ENCODE measurements at regions of chr10 and their contacts with region 1.

Region 1: GRCh38 chr10:131900350-131901146 is at the start of gene PPP2R2D:
- DNase-seq: peak; percentile 96 to 98
- ATAC-seq: peak; percentile 97
- H3K4me3 ChIP-seq: peak within 1 kb of the TSS; percentile 94 to 98
- H3K27ac ChIP-seq: peak within 1 kb of the TSS; percentile 92 to 97
- H3K4me1 ChIP-seq: peaks cover 0 to under 1% of the 10 kb centered on the region in 2 donors
- H3K27me3 ChIP-seq: no peaks in the 10 kb centered on the region
- total RNA-seq, gene PPP2R2D: 27.0 to 29.4 TPM

Region 2: GRCh38 chr10:131819241-131820072 is 81.1 kb before region 1 on chr10:
- intact Hi-C with region 1: no loop called
- DNase-seq: peak in 1 of 2 donors; percentile 50
- ATAC-seq: no peak
- H3K4me3 ChIP-seq: no peak overlapping the region
- H3K27ac ChIP-seq: no peak overlapping the region
- H3K4me1 ChIP-seq: no peaks in the 10 kb centered on the region
- H3K27me3 ChIP-seq: no peaks in the 10 kb centered on the region

Region 3: DNA sequence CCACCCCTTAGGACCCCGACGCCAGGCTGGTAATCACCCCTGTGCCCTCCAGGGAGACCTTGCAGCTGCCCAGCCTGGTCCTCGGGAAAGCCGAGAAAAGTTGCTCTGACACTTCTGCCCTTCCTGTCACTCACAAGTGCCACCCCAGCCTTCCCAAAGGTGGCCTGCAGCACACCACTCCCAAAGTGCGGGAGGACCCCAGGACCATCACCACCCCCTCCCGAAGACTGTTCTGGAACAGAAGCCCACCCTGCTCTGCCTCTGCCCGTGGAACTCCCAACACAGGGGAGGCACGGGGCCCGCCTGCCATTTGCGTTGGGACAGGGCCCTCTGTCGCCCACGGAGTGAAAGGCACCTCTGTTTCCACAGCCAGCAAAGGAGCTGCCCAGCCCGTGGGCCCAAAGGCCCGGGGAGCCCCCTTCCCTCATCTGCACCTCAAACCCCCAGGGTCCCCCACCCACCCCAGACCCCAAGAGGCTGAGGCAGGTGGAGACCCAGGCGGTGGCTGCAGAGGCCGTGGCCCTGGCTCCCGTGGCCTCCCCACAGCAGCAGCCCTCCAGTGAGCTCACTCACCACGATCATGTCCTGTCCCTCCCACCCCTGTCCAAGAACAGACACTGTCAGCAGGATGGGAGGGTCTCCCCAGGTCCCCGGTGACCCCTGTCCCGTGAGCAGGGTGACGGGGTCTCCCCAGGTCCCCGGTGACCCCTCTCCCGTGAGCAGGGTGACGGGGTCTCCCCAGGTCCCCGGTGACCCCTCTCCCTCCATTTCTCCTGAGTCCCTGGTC is 47.5 kb before region 1 on chr10:
- intact Hi-C with region 1: no loop called
- DNase-seq: peak; percentile 29 to 61
- ATAC-seq: no peak
- H3K4me3 ChIP-seq: no peak overlapping the region
- H3K27ac ChIP-seq: no peak overlapping the region
- H3K4me1 ChIP-seq: no peaks in the 10 kb centered on the region
- H3K27me3 ChIP-seq: no peaks in the 10 kb centered on the region

Region 4: DNA sequence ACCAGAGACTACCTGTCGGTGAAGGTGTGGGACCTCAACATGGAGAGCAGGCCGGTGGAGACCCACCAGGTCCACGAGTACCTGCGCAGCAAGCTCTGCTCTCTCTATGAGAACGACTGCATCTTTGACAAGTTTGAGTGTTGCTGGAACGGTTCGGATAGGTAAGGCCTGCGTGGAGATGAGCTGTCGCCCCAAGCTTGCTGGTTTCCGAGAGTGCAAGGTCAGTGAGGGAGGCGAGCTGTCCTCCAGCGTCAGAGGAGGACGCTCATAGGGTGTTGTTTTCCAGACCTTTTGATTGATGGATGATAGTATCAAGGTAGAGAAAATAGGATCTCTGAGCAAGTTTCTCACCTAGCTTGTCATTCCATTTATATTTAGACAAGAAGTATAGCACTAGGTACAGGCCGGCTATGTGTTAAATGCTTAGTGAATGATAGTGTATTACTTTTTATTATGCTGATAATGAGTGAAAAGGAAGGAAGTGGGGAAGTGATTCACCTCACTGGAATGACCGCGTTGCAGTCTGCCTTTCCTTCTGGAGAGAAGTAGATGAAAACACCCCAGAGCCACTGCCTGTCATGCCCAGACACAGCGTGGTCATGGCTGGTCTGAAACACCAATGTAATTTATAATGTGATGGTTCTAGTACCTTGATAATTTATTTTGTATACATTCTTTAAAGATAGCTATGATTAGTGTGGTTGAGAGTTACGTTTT is 47.2 kb after region 1 on chr10:
- intact Hi-C with region 1: loop called in 1 of 2 experiments (anchors 1 kb)
- DNase-seq: peak in 1 of 2 donors; percentile 45
- ATAC-seq: no peak
- H3K4me3 ChIP-seq: no peak overlapping the region
- H3K27ac ChIP-seq: no peak overlapping the region
- H3K4me1 ChIP-seq: peaks cover 0 to 5% of the 10 kb centered on the region in 2 donors
- H3K27me3 ChIP-seq: no peaks in the 10 kb centered on the region

Region 5: GRCh38 chr10:131981429-131982184 is 81.1 kb after region 1 on chr10 and contains the start of gene BNIP3:
- intact Hi-C with region 1: loop called in 1 of 2 experiments (anchors 1 kb)
- DNase-seq: peak; percentile 95 to 99
- ATAC-seq: peak; percentile 94
- H3K4me3 ChIP-seq: peak within 1 kb of the TSS; percentile 40 to 97
- H3K27ac ChIP-seq: no peak within 1 kb of the TSS
- H3K4me1 ChIP-seq: no peaks in the 10 kb centered on the region
- H3K27me3 ChIP-seq: no peaks in the 10 kb centered on the region
- total RNA-seq, gene BNIP3: 29.4 to 32.7 TPM

Region 6: DNA sequence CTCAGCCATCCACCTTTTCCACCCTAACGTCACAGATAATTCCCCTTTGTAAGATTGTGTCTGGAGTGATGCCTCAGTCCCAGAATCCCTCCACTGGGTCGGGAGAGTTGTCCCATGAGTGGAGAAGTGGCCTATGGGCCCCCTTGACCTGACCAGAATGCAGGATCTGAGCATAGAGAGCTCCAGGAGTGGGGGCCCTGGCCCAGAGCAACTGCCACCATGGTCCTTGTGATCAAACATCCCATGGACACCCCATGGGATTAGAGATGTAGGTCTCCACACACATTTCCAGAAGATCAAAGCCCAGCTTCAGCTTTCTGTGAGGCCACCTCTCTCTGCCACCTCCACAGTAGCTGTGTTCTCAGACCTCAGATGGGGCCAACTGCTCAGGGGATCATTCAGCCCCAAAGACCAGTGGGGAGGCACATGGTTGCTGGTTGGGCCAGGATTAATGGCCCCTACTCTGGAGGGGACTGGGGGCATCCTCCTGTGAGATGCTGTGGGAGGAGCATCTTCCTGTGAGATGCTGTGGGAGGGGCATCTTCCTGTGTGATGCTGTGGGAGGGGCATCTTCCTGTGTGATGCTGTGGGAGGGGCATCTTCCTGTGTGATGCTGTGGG is 257.7 kb after region 1 on chr10:
- intact Hi-C with region 1: loop called in 1 of 2 experiments (anchors 10 kb)
- DNase-seq: peak in 1 of 2 donors; percentile 24
- ATAC-seq: no peak
- H3K4me3 ChIP-seq: no peak overlapping the region
- H3K27ac ChIP-seq: no peak overlapping the region
- H3K4me1 ChIP-seq: no peaks in the 10 kb centered on the region
- H3K27me3 ChIP-seq: no peaks in the 10 kb centered on the region

Region 7: DNA sequence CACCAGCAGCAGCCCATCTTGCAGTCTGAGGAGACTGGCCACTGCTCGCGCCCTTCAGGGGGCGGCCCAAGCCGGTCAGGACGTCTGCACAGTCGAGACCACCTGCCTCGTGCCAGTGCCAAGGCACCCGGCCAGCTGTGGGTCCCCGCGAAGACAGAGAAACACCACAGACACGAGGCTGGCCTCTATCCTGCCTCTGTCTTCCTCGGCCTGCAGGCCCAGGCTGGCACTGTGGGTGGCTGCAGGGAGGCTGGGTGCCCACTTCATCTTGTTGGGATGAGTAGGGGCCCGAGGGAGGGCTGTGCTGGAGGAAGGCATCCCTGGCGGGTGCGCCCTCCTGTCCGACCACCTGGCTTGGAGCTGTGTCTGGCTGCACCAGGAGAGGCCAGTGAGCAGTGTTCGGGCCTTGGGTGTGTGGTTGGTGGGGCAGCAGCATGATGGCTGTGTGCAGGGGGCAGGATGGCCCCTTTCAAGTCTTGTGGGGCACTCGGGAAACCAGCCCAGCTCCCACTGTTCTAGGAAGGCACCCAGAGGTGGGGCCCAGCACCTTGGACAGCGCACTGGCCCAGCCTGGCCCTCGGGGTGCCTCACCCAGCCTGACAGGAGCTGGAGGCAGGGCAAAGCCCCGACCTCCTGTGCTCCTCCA is 293.5 kb after region 1 on chr10:
- intact Hi-C with region 1: no loop called
- DNase-seq: peak; percentile 52 to 54
- ATAC-seq: no peak
- H3K4me3 ChIP-seq: no peak overlapping the region
- H3K27ac ChIP-seq: no peak overlapping the region
- H3K4me1 ChIP-seq: no peaks in the 10 kb centered on the region
- H3K27me3 ChIP-seq: no peaks in the 10 kb centered on the region

Region 8: DNA sequence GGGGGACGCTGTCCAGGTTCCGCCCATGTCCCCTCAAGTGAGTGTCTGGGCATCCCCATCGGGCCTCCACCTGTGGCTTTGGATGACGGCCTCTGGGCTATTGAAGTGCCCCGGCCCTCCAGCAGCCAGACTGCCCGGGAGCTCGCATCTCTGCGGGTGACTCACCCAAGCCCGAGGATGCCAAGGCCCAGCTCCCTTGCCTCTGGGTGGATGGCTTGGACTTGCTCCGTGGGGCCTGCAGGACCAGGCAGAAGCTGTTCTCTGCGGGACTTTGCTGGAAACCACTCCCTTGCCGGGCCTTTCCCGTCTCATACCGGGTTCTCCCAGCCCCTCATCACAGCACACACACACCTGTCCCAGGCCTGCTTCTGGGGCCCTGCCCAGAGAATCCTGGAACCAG is 308.6 kb after region 1 on chr10:
- intact Hi-C with region 1: no loop called
- DNase-seq: no peak
- ATAC-seq: no peak
- H3K4me3 ChIP-seq: no peak overlapping the region
- H3K27ac ChIP-seq: no peak overlapping the region
- H3K4me1 ChIP-seq: no peaks in the 10 kb centered on the region
- H3K27me3 ChIP-seq: no peaks in the 10 kb centered on the region